H1 (cell line): ENCODE measurements at regions of chr4 and their contacts with region 1.

Region 1: DNA sequence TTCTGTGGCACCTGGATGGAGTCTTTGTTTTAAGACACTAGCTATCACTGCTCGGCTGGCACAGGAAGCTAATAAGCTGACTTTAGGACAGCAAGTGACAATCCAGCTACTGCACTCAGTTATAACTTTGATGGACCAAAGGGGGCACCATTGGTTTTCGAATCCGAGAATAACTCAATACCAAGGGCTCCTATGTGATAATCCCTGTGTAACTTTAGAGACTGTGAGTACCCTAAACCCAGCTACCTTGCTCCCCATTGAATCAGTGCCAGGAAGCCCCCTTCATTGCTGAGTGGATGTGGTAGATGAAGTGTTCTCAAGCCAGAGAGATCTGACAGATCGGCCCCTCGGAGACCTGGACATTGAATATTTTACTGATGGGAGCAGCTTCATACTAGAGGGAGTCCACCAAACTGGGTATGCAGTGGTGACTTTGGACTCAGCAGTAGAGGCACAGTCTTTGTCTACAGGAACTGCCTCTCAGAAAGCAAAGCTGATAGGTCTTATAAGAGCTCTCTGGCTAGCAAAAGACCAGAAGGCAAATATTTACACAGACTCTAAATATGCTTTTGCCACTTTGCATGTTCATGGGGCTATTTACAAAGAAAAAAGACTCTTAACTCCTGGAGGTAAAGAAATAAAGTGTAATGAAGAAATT is 35.5 kb upstream of the UGT2B7 start:
- DNase-seq: no peak
- H3K4me3 ChIP-seq: no peak overlapping the region
- H3K27ac ChIP-seq: no peak overlapping the region
- H3K4me1 ChIP-seq: peaks cover 13 to 20% (median 14%) of the 10 kb centered on the region in 4 experiments; a peak in 6 of 7 replicates
- H3K27me3 ChIP-seq: no peaks in the 10 kb centered on the region
- CTCF ChIP-seq: peak in 2 of 3 experiments; percentile 14 to 38; a peak in 1 of 4 replicates
- EP300 ChIP-seq: no peak
- POLR2A ChIP-seq: no peak
- RAD21 ChIP-seq: peak; percentile 45 to 65

Region 2: DNA sequence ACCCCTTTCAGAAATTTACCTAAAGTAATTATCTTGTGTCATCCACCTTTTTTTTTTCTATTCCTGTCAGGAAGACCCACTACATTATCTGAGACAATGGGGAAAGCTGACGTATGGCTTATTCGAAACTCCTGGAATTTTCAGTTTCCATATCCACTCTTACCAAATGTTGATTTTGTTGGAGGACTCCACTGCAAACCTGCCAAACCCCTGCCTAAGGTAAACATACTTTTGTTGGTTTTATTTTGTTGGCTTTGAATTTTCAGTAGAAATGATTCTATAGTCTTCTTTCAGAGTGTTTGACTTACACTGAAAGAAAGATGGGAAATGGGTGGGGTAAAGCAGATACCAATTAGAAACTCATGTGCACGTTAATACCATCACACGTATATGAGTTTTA is 37.7 kb after region 1 on chr4:
- CTCF ChIA-PET with region 1: no interaction called
- POLR2A ChIA-PET with region 1: no interaction called
- DNase-seq: no peak
- H3K4me3 ChIP-seq: no peak overlapping the region
- H3K27ac ChIP-seq: no peak overlapping the region
- H3K4me1 ChIP-seq: no peaks in the 10 kb centered on the region
- H3K27me3 ChIP-seq: no peaks in the 10 kb centered on the region
- CTCF ChIP-seq: no peak
- EP300 ChIP-seq: no peak
- POLR2A ChIP-seq: no peak
- RAD21 ChIP-seq: no peak

Region 3: DNA sequence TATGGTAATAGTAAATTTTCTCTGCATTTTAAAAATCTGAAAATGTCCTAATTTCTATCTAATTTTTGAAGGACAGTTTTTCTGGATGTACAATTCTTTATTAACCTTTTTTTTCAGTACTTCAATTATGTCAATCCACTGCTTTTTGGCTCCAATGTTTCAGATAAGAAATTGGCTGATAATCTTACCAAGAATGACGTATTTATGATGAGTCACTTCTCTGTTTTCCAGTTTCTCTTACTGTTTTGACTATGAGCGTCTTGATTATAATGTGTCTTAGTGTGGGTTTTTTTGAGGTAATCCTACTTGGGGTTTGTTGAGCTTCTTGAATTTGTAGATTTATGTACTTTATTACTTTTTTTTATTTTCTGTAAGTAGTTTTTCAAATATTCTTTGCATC is 106.5 kb after region 1 on chr4:
- CTCF ChIA-PET with region 1: interaction called, 14 read pairs
- POLR2A ChIA-PET with region 1: no interaction called
- DNase-seq: no peak
- H3K4me3 ChIP-seq: no peak overlapping the region
- H3K27ac ChIP-seq: no peak overlapping the region
- H3K4me1 ChIP-seq: no peaks in the 10 kb centered on the region
- H3K27me3 ChIP-seq: no peaks in the 10 kb centered on the region
- CTCF ChIP-seq: no peak
- EP300 ChIP-seq: no peak
- POLR2A ChIP-seq: no peak
- RAD21 ChIP-seq: no peak